Activated naive CD4-positive, alpha-beta T cell treated with anti-CD3 and anti-CD28 coated beads for 36 hours (primary cell): ENCODE measurements at regions of chr6 and their contacts with region 1.

Region 1: GRCh38 chr6:28895134-28895812 is 28.5 kb downstream of the TRIM27 start:
- DNase-seq: peak; percentile 98
- H3K4me3 Mint-ChIP-seq: peak overlapping the region; percentile 96
- H3K27ac Mint-ChIP-seq: peak overlapping the region; percentile 100
- H3K4me1 Mint-ChIP-seq: peaks cover 6% of the 10 kb centered on the region
- H3K27me3 Mint-ChIP-seq: peaks cover 3% of the 10 kb centered on the region

Region 2: DNA sequence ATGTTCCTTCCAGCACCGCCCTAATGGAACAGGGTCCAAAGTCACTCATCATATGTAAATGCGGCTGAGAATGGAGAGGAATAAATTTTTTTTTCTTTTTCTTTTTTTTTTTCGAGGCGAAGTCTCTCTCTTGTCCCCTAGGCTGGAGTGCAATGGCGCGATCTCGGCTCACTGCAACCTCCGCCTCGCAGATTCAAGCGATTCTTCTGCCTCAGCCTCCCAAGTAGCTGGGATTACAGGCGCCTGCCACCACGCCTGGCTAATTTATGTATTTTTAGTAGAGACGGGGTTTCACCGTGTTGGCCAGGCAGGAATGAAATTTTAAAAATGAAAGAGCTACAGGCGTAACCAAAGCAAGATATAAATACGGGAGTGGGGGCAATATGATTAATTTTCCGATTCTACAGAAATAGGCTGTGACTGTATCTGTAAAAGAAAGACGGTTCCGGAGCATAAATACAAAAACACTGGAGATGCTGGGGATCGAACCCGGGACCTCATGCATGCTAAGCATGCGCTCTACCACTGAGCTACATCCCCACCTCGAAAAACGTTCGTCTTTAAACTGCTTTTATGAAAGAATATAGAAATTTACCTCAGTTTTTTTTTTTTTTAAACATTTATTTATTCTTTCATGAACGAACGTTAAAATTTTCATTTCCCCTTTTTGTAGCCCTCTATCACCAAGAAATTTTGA is 237.4 kb before region 1 on chr6:
- CTCF ChIA-PET with region 1: no interaction called
- intact Hi-C with region 1: loop called (anchors 1 kb)
- DNase-seq: peak; percentile 74
- H3K4me3 Mint-ChIP-seq: peak overlapping the region; percentile 73
- H3K27ac Mint-ChIP-seq: peak overlapping the region; percentile 64
- H3K4me1 Mint-ChIP-seq: peaks cover 18% of the 10 kb centered on the region
- H3K27me3 Mint-ChIP-seq: peaks cover 63% of the 10 kb centered on the region

Region 3: GRCh38 chr6:28863604-28864320 is 31.5 kb before region 1 on chr6:
- CTCF ChIA-PET with region 1: no interaction called
- intact Hi-C with region 1: loop called (anchors 1 kb)
- DNase-seq: peak; percentile 89
- H3K4me3 Mint-ChIP-seq: peak overlapping the region; percentile 86
- H3K27ac Mint-ChIP-seq: peak overlapping the region; percentile 92
- H3K4me1 Mint-ChIP-seq: peaks cover 33% of the 10 kb centered on the region
- H3K27me3 Mint-ChIP-seq: peaks cover 3% of the 10 kb centered on the region

Region 4: DNA sequence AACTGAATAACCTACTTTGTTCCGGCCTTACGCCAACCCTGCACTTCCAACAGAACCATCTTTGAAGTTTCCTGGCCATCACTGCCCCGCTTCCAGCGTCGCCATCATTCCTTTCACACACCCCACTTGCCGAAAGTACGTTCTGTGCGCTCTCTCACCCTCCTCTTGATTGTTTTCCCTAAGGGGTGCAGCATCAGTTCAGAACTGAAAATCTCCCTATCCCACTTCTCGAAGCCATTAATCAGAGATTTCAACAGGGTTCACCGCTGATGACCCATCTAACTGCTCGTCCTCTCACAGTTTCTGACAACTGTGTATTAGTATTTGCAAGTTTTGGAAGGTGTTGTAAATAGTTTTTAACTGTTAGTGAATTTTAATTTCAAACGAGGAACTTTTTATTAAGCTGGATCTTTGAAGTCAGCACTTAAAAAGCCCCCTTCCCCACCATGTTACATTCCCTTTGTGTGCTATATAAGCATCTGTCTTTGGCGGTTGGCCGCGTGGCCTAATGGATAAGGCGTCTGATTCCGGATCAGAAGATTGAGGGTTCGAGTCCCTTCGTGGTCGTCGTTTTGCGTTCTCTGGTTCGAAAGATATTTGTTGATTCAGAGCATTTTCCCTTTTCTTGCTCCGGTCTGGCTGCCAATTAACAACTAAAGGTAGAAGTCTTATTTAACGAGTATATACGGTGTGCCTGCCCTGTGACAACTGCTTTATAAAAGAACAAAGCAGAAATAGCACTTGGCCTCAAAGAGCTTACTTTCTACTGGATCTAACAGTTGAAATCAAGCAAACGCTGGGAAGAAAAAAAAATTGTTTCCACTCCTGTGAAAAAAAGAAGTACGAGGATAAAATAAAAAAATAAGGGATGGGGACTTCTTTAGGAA is 14.1 kb before region 1 on chr6:
- CTCF ChIA-PET with region 1: interaction called, 3 read pairs
- intact Hi-C with region 1: loop called (anchors 1 kb)
- DNase-seq: peak; percentile 86
- H3K4me3 Mint-ChIP-seq: peak overlapping the region; percentile 76
- H3K27ac Mint-ChIP-seq: peak overlapping the region; percentile 83
- H3K4me1 Mint-ChIP-seq: peaks cover 36% of the 10 kb centered on the region
- H3K27me3 Mint-ChIP-seq: peaks cover 5% of the 10 kb centered on the region

Region 5: DNA sequence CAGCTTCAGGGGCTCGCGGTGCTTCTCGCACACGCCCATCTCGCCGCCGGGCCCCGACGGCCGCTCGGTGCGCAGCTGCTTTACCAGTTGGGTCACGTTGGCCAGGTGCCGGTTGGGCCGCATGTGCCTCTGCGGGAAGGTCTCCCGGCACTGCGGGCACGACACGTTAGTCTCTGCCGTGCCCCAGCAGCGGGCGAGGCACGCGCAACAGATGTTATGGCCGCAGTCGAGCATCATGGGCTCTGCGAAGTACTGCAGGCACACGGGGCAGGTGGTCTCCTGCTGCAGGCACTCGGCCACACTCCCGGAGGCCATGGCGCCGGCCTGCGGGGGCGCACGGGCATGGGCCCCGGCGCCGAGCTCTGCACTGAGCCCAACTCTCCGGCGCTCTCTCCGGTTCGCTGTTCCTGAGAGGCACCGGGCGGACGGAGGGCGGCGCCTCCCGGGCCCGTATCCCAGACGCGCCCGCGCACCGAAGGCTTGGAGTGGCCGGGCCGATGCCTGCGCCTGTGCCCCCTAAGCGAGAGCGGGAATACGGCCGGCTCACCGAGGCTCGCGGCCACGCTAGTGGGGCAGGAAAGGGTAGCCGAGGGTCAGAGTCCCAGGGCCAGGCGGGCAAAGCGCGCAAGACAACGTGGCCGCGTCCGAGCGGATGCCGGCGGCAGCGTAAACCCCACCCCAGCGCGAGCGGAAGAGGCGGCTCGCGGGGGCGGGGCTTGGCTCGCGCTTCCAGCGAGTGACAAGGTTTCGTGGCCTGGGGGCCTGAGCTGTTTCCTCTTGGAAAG is 28.2 kb after region 1 on chr6 and contains the start of gene TRIM27:
- CTCF ChIA-PET with region 1: no interaction called
- intact Hi-C with region 1: loop called (anchors 1 kb)
- DNase-seq: peak; percentile 77
- H3K4me3 Mint-ChIP-seq: peak within 1 kb of the TSS; percentile 93
- H3K27ac Mint-ChIP-seq: peak within 1 kb of the TSS; percentile 95
- H3K4me1 Mint-ChIP-seq: peaks cover 39% of the 10 kb centered on the region
- H3K27me3 Mint-ChIP-seq: no peaks in the 10 kb centered on the region
- total RNA-seq, gene TRIM27: 35.8 to 41.4 TPM

Region 6: DNA sequence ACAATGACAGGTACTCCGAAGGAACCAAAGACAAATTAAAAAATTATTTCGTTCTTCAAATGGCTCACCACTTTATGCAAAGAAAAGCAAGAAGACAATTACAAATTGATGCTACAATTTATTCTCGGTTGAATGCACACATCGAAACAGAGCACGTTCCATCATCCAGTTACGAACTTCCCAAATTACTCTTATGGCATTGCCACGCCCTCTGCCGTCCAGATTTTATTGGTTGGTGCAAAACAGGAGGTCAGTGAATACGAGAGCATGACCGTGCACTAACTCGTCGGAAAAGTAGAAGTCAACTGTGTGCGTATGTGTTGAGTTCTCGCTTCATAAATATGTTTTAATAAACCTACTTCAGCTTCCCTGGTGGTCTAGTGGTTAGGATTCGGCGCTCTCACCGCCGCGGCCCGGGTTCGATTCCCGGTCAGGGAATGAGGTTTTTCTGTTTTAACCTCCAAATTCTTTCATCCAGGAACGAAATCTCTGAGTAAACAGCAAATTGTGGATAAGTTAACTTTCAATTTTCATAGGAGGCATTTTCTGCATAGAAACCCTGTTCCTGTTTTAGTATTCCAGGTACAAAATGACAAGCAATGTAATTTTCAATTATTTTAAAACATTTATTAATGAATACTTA is 86.7 kb after region 1 on chr6:
- CTCF ChIA-PET with region 1: no interaction called
- intact Hi-C with region 1: loop called (anchors 1 kb)
- DNase-seq: peak; percentile 78
- H3K4me3 Mint-ChIP-seq: peak overlapping the region; percentile 88
- H3K27ac Mint-ChIP-seq: peak overlapping the region; percentile 84
- H3K4me1 Mint-ChIP-seq: peaks cover 50% of the 10 kb centered on the region
- H3K27me3 Mint-ChIP-seq: peaks cover 29% of the 10 kb centered on the region